ENCODE measurements at regions of chr5 and their contacts with region 1.

Region 1: DNA sequence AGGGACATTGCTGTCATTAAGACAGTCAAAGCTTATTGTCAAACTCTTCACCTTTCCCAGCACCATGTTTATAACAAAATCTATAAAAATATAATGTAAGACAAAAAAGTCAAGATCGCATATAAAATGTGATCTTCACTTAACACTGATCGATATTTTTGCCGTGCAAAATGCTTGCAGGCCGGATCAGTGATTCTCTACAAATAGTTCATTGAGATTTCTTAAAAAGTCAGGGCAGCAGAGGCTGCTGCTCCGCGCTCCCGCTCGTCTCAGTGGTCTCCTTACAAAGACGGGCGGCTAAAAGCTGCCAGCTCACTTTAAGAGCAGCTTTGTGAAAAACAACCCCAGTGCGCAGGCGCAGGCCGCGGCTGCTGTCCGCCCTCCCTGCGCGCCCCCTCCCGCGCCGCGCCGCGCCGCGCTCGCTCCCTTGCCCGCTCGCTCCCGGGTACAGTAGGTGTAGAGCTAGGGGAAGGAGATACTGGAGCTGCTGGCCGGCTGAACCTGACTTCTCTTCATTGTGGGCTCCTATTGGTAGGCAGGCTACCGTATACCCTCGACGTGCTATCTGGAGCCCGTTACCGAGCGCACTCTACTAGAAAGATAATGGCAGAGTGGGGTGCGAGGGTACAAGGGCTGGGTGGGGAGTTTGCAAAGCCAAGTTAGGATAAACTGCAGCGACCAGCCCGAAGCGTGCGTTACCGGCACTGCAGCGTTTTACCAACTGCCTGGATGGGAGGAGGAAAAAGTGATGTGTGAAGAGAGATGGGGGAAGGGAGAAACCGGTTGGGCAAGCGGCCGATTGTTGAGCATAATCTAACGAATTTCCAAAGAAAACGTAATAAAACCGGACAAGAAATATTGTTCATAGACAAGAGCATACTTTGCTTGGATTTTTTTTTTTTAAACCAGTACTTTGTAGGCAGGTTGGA is at the start of gene ARRDC3:
- DNase-seq: peak; percentile 93 to 99 (median 98)
- ATAC-seq: peak; percentile 33
- H3K4me3 ChIP-seq: peak within 1 kb of the TSS; percentile 91
- H3K4me3 Mint-ChIP-seq: peak within 1 kb of the TSS; percentile 93
- H3K27ac ChIP-seq: peak within 1 kb of the TSS; percentile 97 to 100
- H3K27ac Mint-ChIP-seq: peak within 1 kb of the TSS; percentile 99
- H3K4me1 ChIP-seq: peaks cover 7% of the 10 kb centered on the region
- H3K4me1 Mint-ChIP-seq: peaks cover 30% of the 10 kb centered on the region
- H3K27me3 ChIP-seq: no peaks in the 10 kb centered on the region
- H3K27me3 Mint-ChIP-seq: no peaks in the 10 kb centered on the region
- CTCF ChIP-seq: no peak
- total RNA-seq, gene ARRDC3: 273 to 284 TPM

Region 2: DNA sequence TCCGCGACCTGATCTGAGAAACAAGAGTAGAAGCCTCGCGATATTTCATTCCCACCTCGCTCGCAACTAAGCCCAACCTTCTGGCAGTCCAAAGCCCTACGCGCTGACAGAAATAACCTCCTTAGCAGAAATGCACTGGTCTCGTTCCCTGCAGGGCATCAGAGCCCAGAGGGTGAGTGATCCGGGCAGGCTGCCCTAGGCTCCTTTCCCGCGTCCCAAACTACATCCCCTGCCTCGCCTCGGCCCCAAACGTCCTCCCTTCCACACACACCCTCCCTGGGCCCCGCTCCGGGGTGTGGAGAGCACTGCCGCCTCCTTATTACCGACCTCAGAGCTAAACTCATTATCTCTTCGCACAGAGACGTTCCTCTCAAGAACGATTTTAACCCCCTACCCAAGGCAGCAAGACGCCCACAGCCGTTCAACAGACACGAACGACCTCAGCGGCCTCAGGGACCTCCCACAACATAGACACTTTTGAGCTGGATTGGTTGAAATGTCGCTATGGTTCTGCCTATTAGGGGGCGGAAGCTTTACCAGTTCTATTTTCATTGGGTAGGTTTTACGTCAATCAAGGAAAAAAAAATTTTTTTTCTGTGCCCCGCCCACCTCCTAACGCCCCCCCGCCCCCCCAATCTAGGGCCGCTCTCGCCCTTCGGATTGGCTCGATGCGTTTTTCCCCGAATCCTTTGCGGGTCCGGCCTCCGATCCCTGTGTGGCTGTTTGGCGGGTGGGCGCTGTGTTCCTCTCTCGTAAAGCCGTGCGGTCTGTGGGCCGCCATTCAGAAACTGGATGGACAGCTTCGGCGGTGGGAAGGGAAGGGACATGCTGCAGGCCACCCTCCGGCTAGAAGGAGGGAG is 973.7 kb before region 1 on chr5 and contains the start of gene CETN3:
- CTCF ChIA-PET with region 1: no interaction called
- POLR2A ChIA-PET with region 1: interaction called, 39 read pairs
- intact Hi-C with region 1: loop called (anchors 2 to 10 kb)
- DNase-seq: peak; percentile 80 to 95 (median 86)
- ATAC-seq: peak; percentile 91
- H3K4me3 ChIP-seq: peak within 1 kb of the TSS; percentile 82
- H3K4me3 Mint-ChIP-seq: no peak within 1 kb of the TSS
- H3K27ac ChIP-seq: peak within 1 kb of the TSS; percentile 92 to 94
- H3K27ac Mint-ChIP-seq: no peak within 1 kb of the TSS
- H3K4me1 ChIP-seq: peaks cover 7% of the 10 kb centered on the region
- H3K4me1 Mint-ChIP-seq: peaks cover 13% of the 10 kb centered on the region
- H3K27me3 ChIP-seq: no peaks in the 10 kb centered on the region
- H3K27me3 Mint-ChIP-seq: no peaks in the 10 kb centered on the region
- CTCF ChIP-seq: no peak
- total RNA-seq, gene CETN3: 3.2 to 4.9 TPM

Region 3: DNA sequence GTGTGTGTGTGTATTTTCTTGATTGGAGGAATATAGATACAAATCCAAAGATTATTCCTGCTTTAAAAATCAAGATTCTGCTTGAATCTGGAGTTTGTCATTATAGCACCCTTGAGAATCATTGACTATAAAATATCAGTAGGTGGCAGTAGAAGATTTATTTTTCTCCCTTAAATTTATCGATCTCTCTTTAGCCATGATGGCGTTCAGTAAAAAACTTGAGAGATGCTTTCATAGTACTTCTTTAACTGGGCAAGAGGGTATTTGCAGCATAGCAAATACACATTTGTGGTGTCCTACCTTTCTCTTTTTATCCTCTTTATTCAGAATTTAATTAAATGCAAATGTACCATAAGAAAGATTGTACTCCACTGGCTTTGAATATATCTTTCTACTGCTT is 517.0 kb before region 1 on chr5:
- CTCF ChIA-PET with region 1: interaction called, 8 read pairs
- POLR2A ChIA-PET with region 1: interaction called, 3 read pairs
- intact Hi-C with region 1: loop called in 1 of 2 experiments (anchors 10 kb)
- DNase-seq: peak in 3 of 14 experiments; percentile 35 to 46 (median 44)
- ATAC-seq: no peak
- H3K4me3 ChIP-seq: no peak overlapping the region
- H3K4me3 Mint-ChIP-seq: no peak overlapping the region
- H3K27ac ChIP-seq: no peak overlapping the region
- H3K27ac Mint-ChIP-seq: no peak overlapping the region
- H3K4me1 ChIP-seq: no peaks in the 10 kb centered on the region
- H3K4me1 Mint-ChIP-seq: peaks cover 7% of the 10 kb centered on the region
- H3K27me3 ChIP-seq: no peaks in the 10 kb centered on the region
- H3K27me3 Mint-ChIP-seq: peaks cover 12% of the 10 kb centered on the region
- CTCF ChIP-seq: peak; percentile 43

Region 4: GRCh38 chr5:91101600-91102379 is 281.5 kb before region 1 on chr5:
- CTCF ChIA-PET with region 1: interaction called, 5 read pairs
- POLR2A ChIA-PET with region 1: interaction called, 4 read pairs
- intact Hi-C with region 1: loop called in 1 of 2 experiments (anchors 2 kb)
- DNase-seq: peak; percentile 3 to 76 (median 25)
- ATAC-seq: peak; percentile 84
- H3K4me3 ChIP-seq: no peak overlapping the region
- H3K4me3 Mint-ChIP-seq: no peak overlapping the region
- H3K27ac ChIP-seq: no peak overlapping the region
- H3K27ac Mint-ChIP-seq: no peak overlapping the region
- H3K4me1 ChIP-seq: no peaks in the 10 kb centered on the region
- H3K4me1 Mint-ChIP-seq: no peaks in the 10 kb centered on the region
- H3K27me3 ChIP-seq: no peaks in the 10 kb centered on the region
- H3K27me3 Mint-ChIP-seq: no peaks in the 10 kb centered on the region
- CTCF ChIP-seq: peak; percentile 41

Region 5: DNA sequence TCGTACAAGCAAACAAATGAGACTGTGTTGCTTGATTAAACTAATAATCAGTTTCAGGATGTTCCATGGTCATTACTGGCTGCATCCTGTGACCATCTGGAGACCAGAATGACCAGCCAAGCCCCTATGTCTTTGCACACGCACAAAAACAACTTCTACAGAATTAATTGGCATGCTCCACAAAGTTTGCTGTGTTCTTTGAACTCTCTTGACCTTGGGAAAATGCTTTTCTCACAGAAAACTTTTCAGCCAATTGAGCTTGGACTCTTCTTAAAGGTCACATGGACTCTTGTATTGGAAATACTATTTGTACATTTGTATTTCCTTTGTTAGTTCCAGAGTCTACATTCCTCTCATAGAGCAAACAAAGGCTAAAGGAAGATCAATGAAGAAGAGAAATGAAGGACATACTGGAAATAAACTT is 148.0 kb before region 1 on chr5:
- CTCF ChIA-PET with region 1: interaction called, 14 read pairs
- POLR2A ChIA-PET with region 1: interaction called, 7 read pairs
- intact Hi-C with region 1: no loop called
- DNase-seq: no peak
- ATAC-seq: no peak
- H3K4me3 ChIP-seq: no peak overlapping the region
- H3K4me3 Mint-ChIP-seq: no peak overlapping the region
- H3K27ac ChIP-seq: no peak overlapping the region
- H3K27ac Mint-ChIP-seq: no peak overlapping the region
- H3K4me1 ChIP-seq: no peaks in the 10 kb centered on the region
- H3K4me1 Mint-ChIP-seq: no peaks in the 10 kb centered on the region
- H3K27me3 ChIP-seq: no peaks in the 10 kb centered on the region
- H3K27me3 Mint-ChIP-seq: no peaks in the 10 kb centered on the region
- CTCF ChIP-seq: no peak

Region 6: DNA sequence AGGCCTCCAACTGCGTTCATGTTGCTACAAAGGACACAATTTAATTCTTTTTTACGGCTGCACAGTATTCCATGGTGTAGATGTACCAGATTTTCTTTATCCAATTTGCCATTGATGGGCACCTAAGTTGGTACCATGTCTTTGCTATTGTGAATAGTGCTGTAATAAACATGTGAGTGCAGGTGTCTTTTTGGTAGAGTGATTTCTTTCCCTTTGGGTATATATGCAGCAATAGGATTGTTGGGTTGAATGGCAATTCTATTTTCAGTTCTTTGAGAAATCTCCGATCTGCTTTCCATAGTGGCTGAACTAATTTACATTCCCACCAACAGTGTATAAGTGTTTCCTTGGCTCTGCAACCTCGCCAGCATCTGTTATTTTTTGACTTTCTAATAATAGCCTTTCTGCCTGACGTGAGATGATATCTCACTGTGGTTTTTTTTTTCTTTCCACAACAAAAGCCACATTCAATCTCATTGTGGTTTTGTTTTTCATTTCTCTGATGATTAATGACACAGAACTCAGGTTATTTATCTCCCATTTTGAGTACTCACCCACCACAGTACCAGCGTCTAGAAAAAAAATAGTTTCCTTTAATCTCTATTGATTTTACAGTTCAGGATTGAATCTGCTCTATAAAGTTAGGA is 22.1 kb before region 1 on chr5:
- CTCF ChIA-PET with region 1: interaction called, 7 read pairs
- POLR2A ChIA-PET with region 1: interaction called, 13 read pairs
- intact Hi-C with region 1: loop called in 1 of 2 experiments (anchors 1 kb)
- DNase-seq: peak in 3 of 14 experiments; percentile 8 to 56 (median 38)
- ATAC-seq: peak; percentile 46
- H3K4me3 ChIP-seq: no peak overlapping the region
- H3K4me3 Mint-ChIP-seq: no peak overlapping the region
- H3K27ac ChIP-seq: no peak overlapping the region
- H3K27ac Mint-ChIP-seq: peak overlapping the region; percentile 43
- H3K4me1 ChIP-seq: no peaks in the 10 kb centered on the region
- H3K4me1 Mint-ChIP-seq: peaks cover 10% of the 10 kb centered on the region
- H3K27me3 ChIP-seq: no peaks in the 10 kb centered on the region
- H3K27me3 Mint-ChIP-seq: no peaks in the 10 kb centered on the region
- CTCF ChIP-seq: no peak

Region 7: GRCh38 chr5:91434348-91434747 is 51.1 kb after region 1 on chr5:
- CTCF ChIA-PET with region 1: no interaction called
- POLR2A ChIA-PET with region 1: interaction called, 12 read pairs
- intact Hi-C with region 1: no loop called
- DNase-seq: peak in 4 of 14 experiments; percentile 15 to 60 (median 20)
- ATAC-seq: peak; percentile 54
- H3K4me3 ChIP-seq: no peak overlapping the region
- H3K4me3 Mint-ChIP-seq: peak overlapping the region; percentile 48
- H3K27ac ChIP-seq: peak overlapping the region in 1 of 2 donors; percentile 20
- H3K27ac Mint-ChIP-seq: peak overlapping the region; percentile 86
- H3K4me1 ChIP-seq: peaks cover 8% of the 10 kb centered on the region
- H3K4me1 Mint-ChIP-seq: peaks cover 34% of the 10 kb centered on the region
- H3K27me3 ChIP-seq: no peaks in the 10 kb centered on the region
- H3K27me3 Mint-ChIP-seq: no peaks in the 10 kb centered on the region
- CTCF ChIP-seq: no peak

Region 8: GRCh38 chr5:91864962-91865361 is 481.7 kb after region 1 on chr5:
- CTCF ChIA-PET with region 1: no interaction called
- POLR2A ChIA-PET with region 1: no interaction called
- intact Hi-C with region 1: no loop called
- DNase-seq: no peak
- ATAC-seq: no peak
- H3K4me3 ChIP-seq: no peak overlapping the region
- H3K4me3 Mint-ChIP-seq: no peak overlapping the region
- H3K27ac ChIP-seq: no peak overlapping the region
- H3K27ac Mint-ChIP-seq: no peak overlapping the region
- H3K4me1 ChIP-seq: no peaks in the 10 kb centered on the region
- H3K4me1 Mint-ChIP-seq: no peaks in the 10 kb centered on the region
- H3K27me3 ChIP-seq: no peaks in the 10 kb centered on the region
- H3K27me3 Mint-ChIP-seq: no peaks in the 10 kb centered on the region
- CTCF ChIP-seq: no peak